Activated T-helper 2 cell treated with anti-CD3 and anti-CD28 coated beads, Interferon-gamma antibody, Interleukin-2, Interleukin-4, amounts not matched to agents 10 μg/mL and 5 μg/mL and 100 μg/mL, durations not matched to agents 14 hours and 24 hours and 36 hours (primary cell): ENCODE measurements at regions of chr1 and their contacts with region 1.

Region 1: GRCh38 chr1:108955881-108956280 is 7.4 kb downstream of the CLCC1 start:
- DNase-seq: no peak
- H3K4me3 Mint-ChIP-seq: no peak overlapping the region
- H3K27ac Mint-ChIP-seq: peak overlapping the region; percentile 87
- H3K4me1 Mint-ChIP-seq: peaks cover 41% of the 10 kb centered on the region
- H3K27me3 Mint-ChIP-seq: peaks cover 3% of the 10 kb centered on the region

Region 2: GRCh38 chr1:108678706-108679105 is 277.2 kb before region 1 on chr1:
- intact Hi-C with region 1: no loop called
- DNase-seq: no peak
- H3K4me3 Mint-ChIP-seq: no peak overlapping the region
- H3K27ac Mint-ChIP-seq: no peak overlapping the region
- H3K4me1 Mint-ChIP-seq: peaks cover 14% of the 10 kb centered on the region
- H3K27me3 Mint-ChIP-seq: peaks cover 5% of the 10 kb centered on the region

Region 3: DNA sequence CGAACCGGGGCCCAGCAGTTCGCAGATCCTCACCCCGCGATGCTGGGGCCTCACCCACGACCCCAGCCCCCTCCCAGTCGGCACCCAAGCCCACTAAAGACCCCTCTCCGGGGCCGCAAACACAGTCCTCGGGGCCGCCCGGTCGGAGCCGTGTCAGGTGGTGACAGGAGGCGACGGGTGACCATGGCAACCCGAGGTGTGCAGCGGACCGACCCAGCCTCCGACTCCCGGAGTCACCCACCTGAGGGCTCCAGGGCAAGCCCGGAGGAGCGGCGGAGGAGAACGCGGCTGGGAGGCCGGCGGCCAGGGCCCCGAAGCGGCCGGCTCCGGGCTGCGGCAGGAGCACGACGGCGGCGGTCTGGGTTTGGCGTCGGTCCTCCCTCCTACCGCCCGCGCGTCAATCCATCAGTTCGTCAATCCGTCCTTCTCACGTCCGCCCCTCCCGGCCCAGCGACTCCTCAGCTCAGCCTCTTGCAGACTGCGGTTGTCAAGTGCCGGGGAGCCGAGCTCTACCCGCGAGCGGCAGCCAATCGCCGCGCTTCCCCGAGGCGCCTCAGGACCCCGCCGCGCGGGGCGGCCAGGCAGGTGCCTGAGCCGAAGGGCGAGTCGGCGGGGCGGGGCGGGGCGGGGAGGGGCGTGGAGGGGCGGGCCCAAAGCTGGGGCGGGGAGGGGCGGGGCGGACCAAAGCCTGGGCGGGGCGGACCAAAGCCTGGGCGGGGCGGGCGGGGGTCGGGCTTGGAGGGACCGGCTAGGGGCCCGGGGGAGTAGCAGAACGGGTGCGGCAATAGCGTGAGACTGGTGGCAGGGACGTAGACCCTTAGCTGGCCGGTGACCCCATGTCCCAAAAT is 86.0 kb after region 1 on chr1 and contains the start of gene WDR47:
- intact Hi-C with region 1: loop called (anchors 2 kb)
- DNase-seq: peak; percentile 95
- H3K4me3 Mint-ChIP-seq: peak within 1 kb of the TSS; percentile 89
- H3K27ac Mint-ChIP-seq: peak within 1 kb of the TSS; percentile 83
- H3K4me1 Mint-ChIP-seq: peaks cover 8% of the 10 kb centered on the region
- H3K27me3 Mint-ChIP-seq: peaks cover 8% of the 10 kb centered on the region
- total RNA-seq, gene WDR47: 10.4 and 11.1 TPM in 2 replicates

Region 4: DNA sequence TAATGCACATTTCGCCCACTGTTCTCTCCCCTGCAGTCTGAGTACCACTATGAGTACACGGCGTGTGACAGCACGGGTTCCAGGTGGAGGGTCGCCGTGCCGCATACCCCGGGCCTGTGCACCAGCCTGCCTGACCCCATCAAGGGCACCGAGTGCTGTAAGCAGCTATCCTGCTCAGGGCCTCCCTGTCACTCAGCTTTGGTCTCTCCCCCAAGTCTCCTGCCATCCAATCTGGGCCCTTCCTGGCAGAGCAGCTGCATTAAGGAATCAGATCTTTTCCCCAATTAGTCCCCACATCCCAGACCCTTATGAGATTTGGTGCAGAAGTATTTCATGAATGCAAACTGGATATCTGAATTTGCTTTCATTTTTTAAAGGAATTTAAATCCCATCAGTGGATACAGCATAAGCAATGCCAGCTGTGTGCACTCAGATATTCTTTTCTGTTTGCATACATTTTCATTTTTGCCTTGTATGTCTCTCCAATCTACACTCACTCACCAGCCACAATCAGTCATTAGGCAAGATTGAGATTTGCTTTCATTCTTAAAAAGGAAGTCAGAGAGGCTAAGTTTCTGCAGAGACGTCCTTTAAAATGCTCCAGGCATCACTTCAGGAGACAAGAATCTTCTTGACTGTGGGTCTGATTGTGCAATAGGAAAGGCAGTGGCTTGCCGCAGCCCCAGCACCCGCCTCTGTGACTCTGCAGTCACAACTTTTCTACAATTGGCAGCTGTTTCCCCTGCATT is 206.2 kb after region 1 on chr1:
- intact Hi-C with region 1: loop called (anchors 5 kb)
- DNase-seq: peak; percentile 43
- H3K4me3 Mint-ChIP-seq: peak overlapping the region; percentile 40
- H3K27ac Mint-ChIP-seq: peak overlapping the region; percentile 9
- H3K4me1 Mint-ChIP-seq: peaks cover 22% of the 10 kb centered on the region
- H3K27me3 Mint-ChIP-seq: peaks cover 22% of the 10 kb centered on the region